ENCODE measurements at regions of chr1 and their contacts with region 1.

Region 1: DNA sequence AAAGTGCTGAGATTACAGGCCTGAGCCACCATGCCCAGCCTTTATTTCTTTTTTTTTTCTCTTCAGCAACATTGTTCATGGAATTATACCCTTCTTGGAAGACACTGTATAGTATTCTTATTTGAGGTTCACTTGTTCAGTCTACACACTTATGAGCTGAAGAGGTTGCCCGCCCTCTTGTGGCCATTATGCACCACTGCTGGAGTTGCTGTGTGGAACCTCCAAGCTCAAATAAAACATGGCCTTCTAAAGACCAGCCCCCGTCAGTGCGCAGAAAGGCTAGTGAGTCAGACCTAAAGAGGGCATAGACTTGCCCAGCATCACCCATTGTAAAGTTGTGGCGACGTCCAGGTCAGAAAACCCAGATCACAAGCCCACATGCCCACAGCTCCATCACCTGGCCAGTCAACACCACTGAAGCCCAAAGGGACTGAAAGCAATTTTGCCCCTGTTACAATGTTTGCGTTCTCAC is 20.4 kb downstream of the LURAP1 start:
- DNase-seq: peak; percentile 79
- ATAC-seq: peak; percentile 98
- H3K4me3 Mint-ChIP-seq: no peak overlapping the region
- H3K27ac Mint-ChIP-seq: no peak overlapping the region
- H3K4me1 Mint-ChIP-seq: peaks cover 5% of the 10 kb centered on the region
- H3K27me3 Mint-ChIP-seq: no peaks in the 10 kb centered on the region

Region 2: GRCh38 chr1:46062651-46063319 is 160.7 kb before region 1 on chr1:
- CTCF ChIA-PET with region 1: interaction called, 10 read pairs
- DNase-seq: peak; percentile 76
- ATAC-seq: peak; percentile 67
- H3K4me3 Mint-ChIP-seq: peak overlapping the region; percentile 29
- H3K27ac Mint-ChIP-seq: peak overlapping the region; percentile 64
- H3K4me1 Mint-ChIP-seq: peaks cover 27% of the 10 kb centered on the region
- H3K27me3 Mint-ChIP-seq: no peaks in the 10 kb centered on the region

Region 3: DNA sequence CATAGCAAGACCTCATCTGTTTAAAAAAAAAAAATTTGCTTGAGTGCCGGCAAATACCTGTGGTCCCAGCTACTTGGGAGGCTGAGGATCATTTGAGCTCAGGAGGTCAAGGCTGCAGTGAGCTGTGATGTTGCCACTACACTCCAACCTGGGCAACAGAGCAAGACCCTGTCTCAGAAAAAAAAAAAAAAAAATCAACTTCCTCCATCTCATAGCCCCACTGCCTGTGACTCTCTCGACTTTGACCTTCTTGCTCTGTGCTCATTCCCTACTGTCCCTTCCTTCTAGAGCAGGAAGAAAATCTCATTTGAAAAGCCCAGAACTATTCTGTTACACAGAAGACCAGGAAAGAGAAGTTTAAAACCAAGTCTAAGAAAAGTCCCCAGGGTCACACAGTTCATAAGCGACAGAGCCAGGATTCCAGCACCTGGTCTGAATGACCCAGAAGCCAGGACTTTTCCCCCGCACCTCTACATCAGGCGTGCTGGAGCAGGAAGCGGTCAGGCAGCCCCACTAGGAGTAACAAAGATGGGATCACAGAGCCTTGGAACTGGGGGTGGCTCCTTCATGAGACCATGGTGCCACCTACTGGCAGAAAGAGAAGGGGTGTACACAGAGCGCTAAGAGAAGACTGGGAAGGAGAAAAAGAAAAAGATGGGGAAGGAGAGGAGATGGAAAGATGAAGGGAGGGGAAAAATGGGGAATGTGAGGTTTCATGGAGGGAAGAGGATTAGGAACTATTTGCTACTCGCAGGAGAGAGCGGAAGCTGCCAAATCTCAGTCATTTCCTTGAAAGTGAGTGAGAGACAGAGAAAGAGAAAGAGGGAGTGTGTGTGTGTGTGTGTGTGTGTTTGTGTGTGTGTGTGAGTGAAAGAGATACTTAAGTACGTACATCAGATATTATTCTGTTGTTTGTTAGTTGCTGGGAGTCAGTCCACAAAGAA is 44.1 kb before region 1 on chr1:
- CTCF ChIA-PET with region 1: interaction called, 16 read pairs
- DNase-seq: peak; percentile 74
- ATAC-seq: peak; percentile 81
- H3K4me3 Mint-ChIP-seq: no peak overlapping the region
- H3K27ac Mint-ChIP-seq: no peak overlapping the region
- H3K4me1 Mint-ChIP-seq: peaks cover 4% of the 10 kb centered on the region
- H3K27me3 Mint-ChIP-seq: no peaks in the 10 kb centered on the region

Region 4: DNA sequence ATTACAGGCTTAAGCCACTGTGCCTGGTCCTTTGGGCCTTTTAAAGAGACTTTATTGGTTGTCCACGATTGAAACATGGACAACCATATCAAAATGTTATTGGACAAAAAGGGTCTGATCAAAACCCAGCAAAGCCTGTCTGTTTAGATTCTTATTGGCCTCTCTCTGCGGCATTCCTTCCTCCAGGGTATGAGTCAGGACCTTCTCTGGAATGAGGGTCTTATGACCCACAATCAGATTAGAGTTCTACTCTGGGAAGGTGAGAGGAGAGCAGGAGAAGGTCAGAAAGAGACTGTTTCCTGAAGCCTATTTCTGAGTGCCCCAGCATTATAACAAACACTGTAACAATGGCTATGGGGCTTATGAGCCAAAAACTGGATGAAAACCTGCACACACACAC is 12.5 kb before region 1 on chr1:
- CTCF ChIA-PET with region 1: interaction called, 11 read pairs
- DNase-seq: no peak
- ATAC-seq: no peak
- H3K4me3 Mint-ChIP-seq: no peak overlapping the region
- H3K27ac Mint-ChIP-seq: no peak overlapping the region
- H3K4me1 Mint-ChIP-seq: no peaks in the 10 kb centered on the region
- H3K27me3 Mint-ChIP-seq: no peaks in the 10 kb centered on the region

Region 5: GRCh38 chr1:46247436-46248121 is 24.1 kb after region 1 on chr1 and contains the start of gene RAD54L:
- CTCF ChIA-PET with region 1: interaction called, 33 read pairs
- DNase-seq: peak; percentile 99
- ATAC-seq: peak; percentile 95
- H3K4me3 Mint-ChIP-seq: peak within 1 kb of the TSS; percentile 99
- H3K27ac Mint-ChIP-seq: peak within 1 kb of the TSS; percentile 98
- H3K4me1 Mint-ChIP-seq: peaks cover 44% of the 10 kb centered on the region
- H3K27me3 Mint-ChIP-seq: no peaks in the 10 kb centered on the region
- total RNA-seq, gene RAD54L: 57.2 to 85.3 TPM

Region 6: DNA sequence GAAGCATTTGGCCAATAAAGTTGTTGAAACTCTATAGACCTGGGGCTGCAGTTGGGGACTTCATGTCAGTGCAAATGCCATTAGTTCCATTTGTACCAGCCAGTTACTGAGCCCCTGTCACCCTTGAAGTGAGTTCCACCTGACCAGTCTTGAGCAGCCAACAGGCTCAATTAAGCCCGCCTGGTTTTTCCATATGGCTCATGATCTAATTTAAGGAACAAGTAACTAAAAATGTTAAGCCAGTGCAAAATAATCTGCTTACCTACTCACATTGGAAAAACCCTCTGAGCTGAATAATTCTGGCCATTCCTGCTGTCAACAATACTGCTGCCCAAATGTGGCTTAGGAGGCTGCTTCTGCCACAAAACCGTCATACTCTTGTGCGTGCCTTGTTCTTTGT is 138.7 kb after region 1 on chr1:
- CTCF ChIA-PET with region 1: no interaction called
- DNase-seq: no peak
- ATAC-seq: no peak
- H3K4me3 Mint-ChIP-seq: no peak overlapping the region
- H3K27ac Mint-ChIP-seq: no peak overlapping the region
- H3K4me1 Mint-ChIP-seq: no peaks in the 10 kb centered on the region
- H3K27me3 Mint-ChIP-seq: no peaks in the 10 kb centered on the region

Measured in activated CD8-positive, alpha-beta memory T cell treated with anti-CD3 and anti-CD28 coated beads, Interleukin-2, amount 10 ng/mL, durations not matched to agents 7 days and 5 days (primary cell).